AG04450 (cell line): ENCODE measurements at regions of chr2 and their contacts with region 1.

Region 1: DNA sequence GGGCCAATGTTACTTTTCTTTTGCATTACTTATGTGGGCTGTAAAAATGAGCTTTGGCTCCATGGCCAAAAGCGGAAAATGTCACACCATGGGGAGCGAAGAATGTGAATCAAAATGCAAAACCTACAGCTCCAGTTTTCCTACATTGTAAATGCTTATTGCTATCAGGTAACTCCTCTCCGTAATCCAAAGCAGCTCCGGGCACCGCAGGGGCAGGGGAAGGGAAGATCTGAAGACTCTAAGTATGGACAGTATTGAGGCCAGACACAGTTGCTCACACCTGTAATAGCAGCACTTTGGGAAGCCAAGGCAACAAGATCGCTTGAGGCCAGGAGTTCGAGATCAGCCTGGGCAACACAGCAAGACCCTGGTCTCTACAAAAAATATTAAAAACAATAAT is 7.1 kb upstream of the AGFG1 start:
- DNase-seq: no peak
- H3K4me3 ChIP-seq: no peak overlapping the region
- H3K27ac ChIP-seq: no peak overlapping the region
- H3K27me3 ChIP-seq: no peaks in the 10 kb centered on the region
- CTCF ChIP-seq: no peak

Region 2: DNA sequence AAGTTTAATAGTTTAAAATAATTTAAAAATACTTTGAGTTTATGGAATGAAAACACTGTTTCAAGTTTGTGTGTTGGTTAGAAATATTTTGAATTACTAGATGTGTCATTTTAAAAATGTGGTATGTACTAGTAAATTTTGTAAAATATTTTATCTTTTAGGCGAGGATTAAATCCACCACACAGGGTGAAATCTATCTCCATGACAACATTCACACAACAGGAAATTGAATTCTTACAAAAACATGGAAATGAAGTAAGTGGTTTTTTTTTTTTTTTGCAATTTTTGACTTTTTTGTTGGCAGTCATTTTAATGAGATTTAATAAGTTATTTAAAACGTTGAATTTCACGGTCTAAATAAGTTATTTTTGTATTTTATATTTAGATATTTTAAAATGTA is 26.5 kb after region 1 on chr2:
- CTCF ChIA-PET with region 1: no interaction called
- POLR2A ChIA-PET with region 1: interaction called, 15 read pairs
- DNase-seq: no peak
- H3K4me3 ChIP-seq: no peak overlapping the region
- H3K27ac ChIP-seq: no peak overlapping the region
- H3K27me3 ChIP-seq: no peaks in the 10 kb centered on the region
- CTCF ChIP-seq: no peak